ENCODE measurements at regions of chr4 and their contacts with region 1.

Region 1: GRCh38 chr4:164779811-164780216 is 25.9 kb downstream of the SMIM31 start:
- DNase-seq: peak in 6 of 7 donors; percentile 18 to 56 (median 33)
- H3K4me3 ChIP-seq: no peak overlapping the region
- H3K27ac ChIP-seq: no peak overlapping the region
- H3K4me1 ChIP-seq: no peaks in the 10 kb centered on the region
- H3K27me3 ChIP-seq: no peaks in the 10 kb centered on the region
- CTCF ChIP-seq: peak; percentile 53 to 72 (median 63)
- POLR2A ChIP-seq: no peak

Region 2: GRCh38 chr4:164484551-164484950 is 295.3 kb before region 1 on chr4:
- intact Hi-C with region 1: no loop called
- DNase-seq: no peak
- H3K4me3 ChIP-seq: no peak overlapping the region
- H3K27ac ChIP-seq: no peak overlapping the region
- H3K4me1 ChIP-seq: no peaks in the 10 kb centered on the region
- H3K27me3 ChIP-seq: no peaks in the 10 kb centered on the region
- CTCF ChIP-seq: no peak
- POLR2A ChIP-seq: no peak

Region 3: DNA sequence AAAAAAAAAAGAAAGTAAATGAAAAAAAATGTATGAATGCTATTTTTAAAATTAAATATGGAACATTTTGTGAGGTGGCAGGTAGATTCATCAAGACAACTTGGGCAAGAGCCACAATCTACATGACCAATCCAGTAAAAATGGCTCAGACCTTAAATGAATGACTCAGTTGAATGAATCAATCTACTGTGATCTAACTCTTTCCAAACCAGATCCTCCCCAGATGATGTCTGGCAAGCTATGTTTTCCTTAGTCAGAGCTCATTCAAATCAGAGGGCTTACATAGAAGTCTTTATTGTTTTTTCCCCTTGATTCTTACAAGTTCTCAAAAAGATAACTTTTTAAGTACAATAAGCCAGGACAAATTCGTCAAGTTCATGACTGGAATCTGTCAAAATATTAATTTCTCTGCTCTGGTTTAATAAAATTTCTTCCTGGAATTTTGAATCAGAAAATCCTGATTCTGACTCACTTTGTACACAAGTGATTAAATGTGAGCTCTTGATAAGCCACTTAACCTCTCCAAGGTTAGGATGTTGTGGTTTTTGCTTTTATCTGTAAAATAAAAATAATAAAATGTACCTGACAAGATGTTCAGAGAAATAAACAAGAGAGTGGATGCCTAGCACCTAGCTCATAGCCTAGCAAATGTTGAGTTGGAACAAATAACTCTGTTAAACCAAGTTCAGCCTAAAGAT is 131.5 kb before region 1 on chr4:
- intact Hi-C with region 1: no loop called
- DNase-seq: peak in 1 of 7 donors; percentile 8
- H3K4me3 ChIP-seq: no peak overlapping the region
- H3K27ac ChIP-seq: no peak overlapping the region
- H3K4me1 ChIP-seq: no peaks in the 10 kb centered on the region
- H3K27me3 ChIP-seq: no peaks in the 10 kb centered on the region
- CTCF ChIP-seq: no peak
- POLR2A ChIP-seq: no peak

Region 4: GRCh38 chr4:165096776-165097175 is 317.0 kb after region 1 on chr4:
- intact Hi-C with region 1: loop called in 1 of 2 experiments (anchors 10 kb)
- DNase-seq: no peak
- H3K4me3 ChIP-seq: no peak overlapping the region
- H3K27ac ChIP-seq: no peak overlapping the region
- H3K4me1 ChIP-seq: no peaks in the 10 kb centered on the region
- H3K27me3 ChIP-seq: no peaks in the 10 kb centered on the region
- CTCF ChIP-seq: peak in 5 of 6 experiments; percentile 20 to 46 (median 39)
- POLR2A ChIP-seq: no peak